Posterior vena cava (tissue), 2 donors: ENCODE measurements at regions of chr9 and their contacts with region 1.

Region 1: GRCh38 chr9:31839273-31839672 is 545.2 kb upstream of the ACO1 start:
- DNase-seq: no peak

Region 2: DNA sequence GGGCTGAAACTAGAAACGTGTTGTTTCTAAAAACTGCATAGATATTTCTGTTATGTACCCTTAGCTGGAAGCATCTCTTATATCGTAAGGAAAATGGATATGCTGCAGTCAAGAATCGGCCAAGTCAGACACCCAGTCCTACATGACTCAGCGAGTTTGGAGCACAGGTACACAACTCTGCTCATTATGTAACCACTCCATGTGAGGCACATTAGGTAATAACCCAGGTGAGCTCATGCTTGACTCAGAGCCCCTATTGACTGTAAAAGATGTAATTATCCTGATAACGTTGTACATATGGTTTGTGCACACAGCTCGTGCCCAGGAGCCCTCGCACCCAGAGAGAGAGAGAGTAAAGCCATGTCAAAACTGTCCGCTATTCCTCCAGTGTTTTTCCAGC is 48.5 kb before region 1 on chr9:
- intact Hi-C with region 1: loop called in 1 of 2 experiments (anchors 1 kb)
- DNase-seq: no peak